ENCODE measurements at regions of chr18 and their contacts with region 1.

Region 1: GRCh38 chr18:49486953-49487710 is at the start of gene C18orf32:
- DNase-seq: peak; percentile 94
- H3K4me3 ChIP-seq: peak within 1 kb of the TSS; percentile 26 to 78 (median 64)
- H3K27ac ChIP-seq: peak within 1 kb of the TSS; percentile 65
- H3K4me1 ChIP-seq: peaks cover 30% of the 10 kb centered on the region
- H3K27me3 ChIP-seq: no peaks in the 10 kb centered on the region
- CTCF ChIP-seq: no peak
- POLR2A ChIP-seq: peak; percentile 99
- total RNA-seq, gene C18orf32: 27.4 and 28.4 TPM in 2 replicates

Region 2: GRCh38 chr18:48263913-48264902 is 1222.9 kb before region 1 on chr18:
- CTCF ChIA-PET with region 1: no interaction called
- POLR2A ChIA-PET with region 1: no interaction called
- dilution Hi-C with region 1: no loop called
- intact Hi-C with region 1: no loop called
- DNase-seq: no peak
- H3K4me3 ChIP-seq: no peak overlapping the region
- H3K27ac ChIP-seq: no peak overlapping the region
- H3K4me1 ChIP-seq: no peaks in the 10 kb centered on the region
- H3K27me3 ChIP-seq: no peaks in the 10 kb centered on the region
- CTCF ChIP-seq: no peak
- POLR2A ChIP-seq: no peak

Region 3: DNA sequence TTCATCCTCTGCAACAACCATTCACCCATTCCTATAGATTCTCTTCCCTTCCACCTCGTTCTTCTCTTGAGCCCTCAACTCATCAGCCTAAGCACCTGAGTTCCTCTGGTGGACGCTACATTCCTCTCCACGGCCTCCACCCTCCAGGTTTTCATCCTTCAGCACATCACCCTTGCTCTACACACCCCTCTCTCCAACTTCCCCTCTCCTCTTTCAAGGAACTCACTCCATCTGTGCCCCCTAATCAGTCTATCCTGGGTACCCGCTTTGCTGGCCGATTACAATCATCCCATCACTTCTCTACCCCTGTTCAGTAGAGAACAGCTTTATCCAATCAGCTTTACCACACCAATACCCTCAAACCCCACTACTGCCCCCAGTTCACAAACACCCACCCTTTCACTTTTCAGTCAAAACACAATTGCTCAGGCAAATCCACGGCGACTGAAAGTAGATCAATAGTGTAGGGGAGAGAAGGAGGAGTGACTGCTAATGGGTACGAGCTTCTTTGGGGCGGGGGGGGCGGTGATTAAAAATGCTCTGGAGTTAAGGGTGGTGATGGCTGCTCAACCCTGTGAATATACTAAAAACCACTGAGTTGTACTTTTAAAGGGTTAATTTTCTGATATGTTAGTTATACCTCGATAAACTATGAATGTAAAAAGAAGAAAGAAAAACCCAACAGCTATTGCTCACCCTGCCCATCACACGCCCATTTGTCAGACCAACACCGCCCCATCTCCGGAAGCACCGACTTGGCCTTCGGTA is 27.5 kb before region 1 on chr18:
- CTCF ChIA-PET with region 1: interaction called, 18 read pairs
- POLR2A ChIA-PET with region 1: interaction called, 3 read pairs
- dilution Hi-C with region 1: no loop called
- intact Hi-C with region 1: loop called (anchors 1 kb)
- DNase-seq: peak; percentile 8
- H3K4me3 ChIP-seq: peak overlapping the region; percentile 57 to 99 (median 87)
- H3K27ac ChIP-seq: peak overlapping the region; percentile 49
- H3K4me1 ChIP-seq: peaks cover 18% of the 10 kb centered on the region
- H3K27me3 ChIP-seq: no peaks in the 10 kb centered on the region
- CTCF ChIP-seq: no peak
- POLR2A ChIP-seq: no peak

Region 4: GRCh38 chr18:49464718-49465598 is 22.2 kb before region 1 on chr18:
- CTCF ChIA-PET with region 1: interaction called, 18 read pairs
- POLR2A ChIA-PET with region 1: interaction called, 3 read pairs
- dilution Hi-C with region 1: no loop called
- intact Hi-C with region 1: loop called (anchors 1 kb)
- DNase-seq: peak; percentile 29
- H3K4me3 ChIP-seq: no peak overlapping the region
- H3K27ac ChIP-seq: no peak overlapping the region
- H3K4me1 ChIP-seq: peaks cover 6% of the 10 kb centered on the region
- H3K27me3 ChIP-seq: peaks cover 0 to 1% of the 10 kb centered on the region in 2 experiments
- CTCF ChIP-seq: no peak
- POLR2A ChIP-seq: no peak

Region 5: GRCh38 chr18:49476664-49477411 is 10.3 kb before region 1 on chr18:
- CTCF ChIA-PET with region 1: interaction called, 13 read pairs
- POLR2A ChIA-PET with region 1: interaction called, 24 read pairs
- dilution Hi-C with region 1: no loop called
- intact Hi-C with region 1: loop called (anchors 1 kb)
- DNase-seq: peak; percentile 89
- H3K4me3 ChIP-seq: peak overlapping the region in 2 of 3 experiments; percentile 48 to 58
- H3K27ac ChIP-seq: peak overlapping the region; percentile 86
- H3K4me1 ChIP-seq: peaks cover 15% of the 10 kb centered on the region
- H3K27me3 ChIP-seq: no peaks in the 10 kb centered on the region
- CTCF ChIP-seq: no peak
- POLR2A ChIP-seq: no peak

Region 6: DNA sequence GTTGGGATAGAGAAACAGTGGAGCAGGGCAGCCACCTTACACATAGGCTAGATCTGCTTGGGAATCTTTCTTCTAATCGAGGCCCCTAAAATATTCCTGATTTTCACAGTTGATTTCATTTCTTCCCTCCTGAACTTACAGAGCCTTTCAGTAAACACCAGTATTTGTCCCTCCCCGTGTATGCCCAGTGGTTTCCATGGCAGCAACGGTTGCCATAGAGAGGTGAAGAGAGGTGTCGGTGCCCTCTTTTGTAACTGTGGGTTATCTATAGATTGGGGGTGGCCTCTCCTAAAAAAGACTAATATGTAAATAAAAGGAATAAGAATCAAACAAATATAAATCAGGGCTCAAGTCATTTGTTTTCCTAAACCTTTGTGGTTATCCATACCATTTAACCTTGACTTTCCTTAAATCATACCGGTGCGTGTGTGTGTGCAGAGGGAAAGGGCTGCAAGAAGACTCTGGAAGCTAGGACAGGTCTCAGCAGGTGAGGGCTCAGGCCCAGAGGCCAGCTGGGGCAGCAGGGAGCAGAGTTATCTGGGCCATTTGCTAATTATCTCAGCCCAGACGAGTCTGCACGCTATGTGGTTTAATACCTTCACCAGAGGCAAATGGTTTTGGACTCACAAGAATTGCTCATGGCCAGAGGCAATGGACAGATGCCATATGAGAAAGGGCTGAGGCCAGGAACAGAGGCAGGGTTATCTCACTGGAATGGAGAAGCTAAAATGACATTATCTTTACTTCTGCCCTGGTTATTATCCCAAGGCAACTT is 110.2 kb after region 1 on chr18:
- CTCF ChIA-PET with region 1: no interaction called
- POLR2A ChIA-PET with region 1: no interaction called
- dilution Hi-C with region 1: no loop called
- intact Hi-C with region 1: no loop called
- DNase-seq: no peak
- H3K4me3 ChIP-seq: no peak overlapping the region
- H3K27ac ChIP-seq: no peak overlapping the region
- H3K4me1 ChIP-seq: no peaks in the 10 kb centered on the region
- H3K27me3 ChIP-seq: no peaks in the 10 kb centered on the region
- CTCF ChIP-seq: no peak
- POLR2A ChIP-seq: no peak

Region 7: DNA sequence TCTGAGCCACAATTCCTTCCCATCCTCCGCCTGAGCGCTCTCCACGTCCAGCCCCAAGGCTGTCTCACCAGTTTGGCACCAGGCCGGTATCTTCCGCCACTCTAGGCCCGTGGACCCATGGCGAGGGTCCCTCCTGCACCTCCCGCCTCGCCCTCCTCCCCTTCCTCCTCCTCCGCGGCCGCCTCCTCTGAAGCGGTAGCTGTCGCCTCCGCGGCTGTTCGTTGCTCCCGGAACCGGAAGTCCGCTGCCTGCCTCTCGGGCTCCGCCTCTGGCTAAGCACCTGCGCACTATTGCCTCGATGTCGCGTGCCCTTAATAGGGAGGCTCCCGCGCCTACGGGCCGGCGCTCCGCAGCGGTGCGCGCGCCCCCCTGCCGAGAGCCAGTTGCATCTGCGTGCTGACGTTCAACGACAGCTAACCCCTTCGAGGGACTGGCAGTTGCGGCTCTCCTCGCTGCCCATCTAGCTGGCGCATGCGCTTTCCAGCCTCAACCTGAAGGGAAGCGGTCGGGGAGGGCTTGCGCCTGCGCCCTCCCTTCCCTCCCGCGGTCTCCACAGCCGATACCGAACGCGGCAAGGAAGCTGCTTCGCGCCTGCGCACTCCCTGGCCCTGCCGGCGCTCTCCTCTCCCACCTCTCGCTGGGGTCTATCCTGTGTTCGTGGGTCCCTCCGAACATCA is 794.3 kb after region 1 on chr18 and contains the start of gene MBD1:
- CTCF ChIA-PET with region 1: no interaction called
- POLR2A ChIA-PET with region 1: no interaction called
- dilution Hi-C with region 1: no loop called
- intact Hi-C with region 1: loop called (anchors 5 kb)
- DNase-seq: peak; percentile 99
- H3K4me3 ChIP-seq: peak within 1 kb of the TSS; percentile 79 to 89 (median 84)
- H3K27ac ChIP-seq: peak within 1 kb of the TSS; percentile 60
- H3K4me1 ChIP-seq: peaks cover 25% of the 10 kb centered on the region
- H3K27me3 ChIP-seq: no peaks in the 10 kb centered on the region
- CTCF ChIP-seq: peak in 1 of 2 donors; percentile 26
- POLR2A ChIP-seq: peak; percentile 89
- total RNA-seq, gene MBD1: 77.5 and 78.6 TPM in 2 replicates

Measured in endothelial cell of umbilical vein (primary cell).